ENCODE measurements at regions of chr7 and their contacts with region 1.

Region 1: DNA sequence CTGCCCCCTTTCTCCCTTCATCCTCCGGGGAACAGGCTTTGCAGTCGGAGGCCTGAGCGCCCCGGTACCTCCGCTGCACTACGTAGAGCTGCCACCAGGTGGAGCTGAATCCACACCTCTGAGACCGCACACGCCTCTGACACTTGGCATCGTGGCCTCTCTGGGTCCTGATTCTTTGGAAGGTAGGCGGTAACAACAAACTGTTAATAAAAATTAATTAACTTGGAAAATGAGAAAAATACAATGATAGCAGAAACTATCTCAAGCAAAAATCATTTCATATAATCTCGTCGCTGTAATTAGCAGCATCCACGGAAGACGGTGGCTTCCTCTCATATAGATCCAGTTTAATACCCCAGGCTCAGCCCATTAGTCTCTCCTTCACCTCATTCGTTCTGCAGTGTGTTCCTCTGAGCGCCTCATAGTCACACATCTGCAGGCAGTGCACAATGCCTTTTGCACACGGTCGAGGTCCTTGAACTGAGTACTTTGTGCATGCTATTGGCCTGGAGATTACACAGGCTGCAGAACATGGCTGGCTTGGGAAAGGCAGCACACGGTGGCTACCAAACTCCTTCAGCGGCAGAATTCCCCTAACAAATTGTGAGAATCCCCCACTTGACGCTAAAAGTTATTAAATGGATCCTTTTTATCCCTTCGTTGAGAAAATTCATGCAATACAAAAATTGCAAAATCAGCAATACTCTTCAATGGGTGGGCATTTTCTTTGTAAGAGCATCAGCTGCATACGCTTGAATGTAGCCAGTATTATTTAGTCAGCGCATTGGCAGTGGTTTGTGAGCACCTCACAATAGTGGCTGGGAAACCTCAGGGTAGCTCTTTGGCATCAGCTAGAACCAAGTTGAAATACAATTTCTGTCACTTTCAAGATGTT is 18.7 kb downstream of the OR9A2 start:
- DNase-seq: peak; percentile 77
- H3K4me3 ChIP-seq: no peak overlapping the region
- H3K27ac ChIP-seq: no peak overlapping the region
- H3K4me1 ChIP-seq: no peaks in the 10 kb centered on the region
- H3K27me3 ChIP-seq: peaks cover 6% of the 10 kb centered on the region
- CTCF ChIP-seq: peak; percentile 96

Region 2: DNA sequence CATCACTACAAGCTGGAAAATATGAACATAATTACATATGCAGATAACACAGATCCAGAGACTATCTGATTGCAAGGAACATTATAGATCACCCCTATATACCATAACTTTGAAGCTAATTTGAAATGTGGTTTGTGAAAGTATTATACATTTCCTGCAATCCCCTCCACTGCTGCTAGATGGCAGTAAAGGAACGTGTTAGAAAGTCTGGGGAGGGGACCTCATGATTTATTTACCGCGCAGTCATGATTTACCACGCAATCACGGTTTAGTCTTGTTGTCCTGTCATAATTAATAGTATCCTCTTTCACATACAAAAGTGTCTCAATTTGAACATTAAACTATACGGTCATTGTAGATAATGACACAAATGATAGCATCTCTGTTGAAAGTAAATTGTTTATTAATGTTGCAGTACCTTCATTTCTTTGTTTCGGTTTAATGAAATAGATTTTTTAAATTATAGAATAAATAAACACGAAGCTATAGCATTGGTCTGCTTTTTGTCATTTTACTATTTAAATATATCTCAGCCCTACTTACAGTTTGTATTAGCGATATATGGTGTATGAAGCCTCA is 404.3 kb before region 1 on chr7:
- CTCF ChIA-PET with region 1: no interaction called
- POLR2A ChIA-PET with region 1: no interaction called
- intact Hi-C with region 1: loop called (anchors 10 kb)
- DNase-seq: peak; percentile 70
- H3K4me3 ChIP-seq: no peak overlapping the region
- H3K27ac ChIP-seq: no peak overlapping the region
- H3K4me1 ChIP-seq: no peaks in the 10 kb centered on the region
- H3K27me3 ChIP-seq: peaks cover 29% of the 10 kb centered on the region
- CTCF ChIP-seq: peak; percentile 85

Region 3: DNA sequence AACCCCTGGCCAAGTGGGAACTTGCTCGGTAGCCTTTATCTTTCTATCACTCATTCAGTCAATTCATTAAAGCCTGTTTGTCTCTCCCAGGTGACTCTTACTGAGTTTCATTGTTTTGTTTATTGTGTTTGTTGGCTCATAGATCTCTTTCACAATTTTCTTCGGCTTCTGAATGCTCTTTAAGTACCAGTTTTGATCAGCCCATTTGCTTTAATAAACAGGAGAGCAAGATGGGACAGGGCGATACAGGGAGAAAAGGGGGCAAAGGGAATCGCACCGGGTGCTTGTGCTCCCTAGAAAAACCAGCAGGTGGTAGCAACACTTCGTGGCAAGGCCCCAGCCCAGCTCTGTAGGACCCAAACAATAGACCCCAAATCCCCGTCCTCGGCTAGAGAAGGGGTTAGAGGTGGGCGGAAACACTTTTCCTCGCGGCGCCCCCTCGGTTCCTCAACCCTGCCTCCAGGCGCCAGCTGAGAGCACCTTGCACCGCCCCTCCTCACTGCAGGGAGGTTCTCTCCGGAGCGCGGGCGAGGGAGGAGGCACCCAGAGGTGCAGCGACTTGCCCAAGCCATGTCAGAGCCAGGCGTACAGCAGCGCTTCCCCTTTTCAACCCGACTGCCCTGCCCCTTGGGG is 154.4 kb before region 1 on chr7:
- CTCF ChIA-PET with region 1: interaction called, 5 read pairs
- POLR2A ChIA-PET with region 1: no interaction called
- intact Hi-C with region 1: loop called (anchors 1 kb)
- DNase-seq: peak; percentile 67
- H3K4me3 ChIP-seq: peak overlapping the region; percentile 50
- H3K27ac ChIP-seq: no peak overlapping the region
- H3K4me1 ChIP-seq: peaks cover 9% of the 10 kb centered on the region
- H3K27me3 ChIP-seq: peaks cover 61% of the 10 kb centered on the region
- CTCF ChIP-seq: peak; percentile 66

Region 4: DNA sequence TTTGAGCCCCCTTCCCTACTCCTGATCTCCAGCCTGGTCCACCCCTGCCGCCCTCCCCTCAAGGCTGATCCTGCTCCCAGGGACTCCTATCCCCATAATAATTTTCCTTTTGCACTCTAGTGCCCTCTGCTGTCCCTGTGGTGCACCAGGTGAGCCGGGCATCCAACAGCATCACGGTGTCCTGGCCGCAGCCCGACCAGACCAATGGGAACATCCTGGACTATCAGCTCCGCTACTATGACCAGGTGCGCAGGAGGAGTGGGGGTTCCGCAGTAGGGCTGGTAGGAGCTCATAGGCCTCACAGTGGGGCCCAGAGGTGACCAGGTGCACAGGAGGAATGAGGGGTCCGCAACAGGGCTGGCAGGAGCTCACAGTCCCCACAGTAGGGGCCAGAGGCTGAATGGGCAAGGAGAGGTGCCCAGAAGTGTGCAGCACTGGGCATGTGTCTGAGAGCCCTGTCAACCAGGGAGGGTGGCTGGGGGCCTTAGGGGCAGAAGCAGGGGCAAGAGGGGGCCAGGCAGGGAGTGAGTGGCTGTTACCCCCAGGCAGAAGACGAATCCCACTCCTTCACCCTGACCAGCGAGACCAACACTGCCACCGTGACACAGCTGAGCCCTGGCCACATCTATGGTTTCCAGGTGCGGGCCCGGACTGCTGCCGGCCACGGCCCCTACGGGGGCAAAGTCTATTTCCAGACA is 141.7 kb before region 1 on chr7:
- CTCF ChIA-PET with region 1: no interaction called
- POLR2A ChIA-PET with region 1: no interaction called
- intact Hi-C with region 1: no loop called
- DNase-seq: peak; percentile 23
- H3K4me3 ChIP-seq: no peak overlapping the region
- H3K27ac ChIP-seq: no peak overlapping the region
- H3K4me1 ChIP-seq: no peaks in the 10 kb centered on the region
- H3K27me3 ChIP-seq: peaks cover 16% of the 10 kb centered on the region
- CTCF ChIP-seq: peak; percentile 52

Region 5: DNA sequence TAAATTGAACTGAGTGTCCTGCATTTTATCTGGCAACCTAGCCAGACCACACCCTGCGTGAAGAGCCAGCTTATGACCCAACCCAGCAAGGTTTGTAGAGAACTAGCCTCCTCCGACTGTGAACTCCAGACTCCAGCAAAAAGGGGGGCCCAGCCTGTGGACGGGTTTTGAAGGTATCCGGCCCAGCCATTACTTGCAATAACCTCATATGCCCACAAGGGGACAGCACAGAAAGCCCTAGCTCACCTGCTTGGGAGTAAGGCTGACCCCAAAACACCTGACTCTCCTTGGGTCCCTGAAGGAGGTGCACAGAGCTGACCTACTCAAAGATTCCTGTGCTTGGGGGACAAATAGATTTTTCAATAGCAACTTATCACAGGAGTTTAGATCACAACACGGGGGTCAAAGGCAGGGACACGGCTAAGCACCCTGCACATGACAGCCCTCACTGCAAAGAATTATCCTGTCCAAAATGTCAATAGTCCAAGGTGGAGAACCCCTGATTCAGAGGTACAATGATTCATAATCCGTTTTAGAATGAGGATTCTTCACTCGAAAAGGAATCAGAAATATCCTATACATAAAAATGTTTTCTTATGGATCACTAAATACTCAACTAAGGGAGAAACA is 127.3 kb before region 1 on chr7:
- CTCF ChIA-PET with region 1: interaction called, 5 read pairs
- POLR2A ChIA-PET with region 1: no interaction called
- intact Hi-C with region 1: loop called (anchors 5 kb)
- DNase-seq: peak; percentile 22
- H3K4me3 ChIP-seq: no peak overlapping the region
- H3K27ac ChIP-seq: no peak overlapping the region
- H3K4me1 ChIP-seq: no peaks in the 10 kb centered on the region
- H3K27me3 ChIP-seq: peaks cover 28% of the 10 kb centered on the region
- CTCF ChIP-seq: peak; percentile 74

Measured in A673 (cell line).